ENCODE measurements at regions of chrX and their contacts with region 1.

Region 1: GRCh38 chrX:96770315-96770714 is 85.7 kb downstream of the DIAPH2 start:
- DNase-seq: no peak
- ATAC-seq: no peak
- H3K4me3 ChIP-seq: no peak overlapping the region
- H3K27ac ChIP-seq: no peak overlapping the region
- H3K4me1 ChIP-seq: no peaks in the 10 kb centered on the region
- H3K27me3 ChIP-seq: no peaks in the 10 kb centered on the region
- CTCF ChIP-seq: peak; percentile 13 to 54 (median 14); a peak in 4 of 6 replicates
- EP300 ChIP-seq: no peak
- POLR2A ChIP-seq: no peak
- RAD21 ChIP-seq: peak; percentile 76

Region 2: GRCh38 chrX:96791559-96791958 is 21.2 kb after region 1 on chrX:
- CTCF ChIA-PET with region 1: interaction called, 10 read pairs
- POLR2A ChIA-PET with region 1: no interaction called
- RAD21 ChIA-PET with region 1: no interaction called
- SMC1A ChIA-PET with region 1: interaction called, 6 read pairs
- in situ Hi-C with region 1: no loop called
- intact Hi-C with region 1: no loop called
- DNase-seq: no peak
- ATAC-seq: no peak
- H3K4me3 ChIP-seq: no peak overlapping the region
- H3K27ac ChIP-seq: no peak overlapping the region
- H3K4me1 ChIP-seq: no peaks in the 10 kb centered on the region
- H3K27me3 ChIP-seq: no peaks in the 10 kb centered on the region
- CTCF ChIP-seq: no peak
- EP300 ChIP-seq: no peak
- POLR2A ChIP-seq: no peak
- RAD21 ChIP-seq: no peak

Measured in GM12878 (cell line).